WTC11 (cell line): ENCODE measurements at regions of chr1 and their contacts with region 1.

Region 1: GRCh38 chr1:159945483-159946241 is at the start of gene IGSF9:
- DNase-seq: peak; percentile 98
- ATAC-seq: peak; percentile 90
- H3K4me3 Mint-ChIP-seq: peak within 1 kb of the TSS; percentile 89
- H3K27ac Mint-ChIP-seq: peak within 1 kb of the TSS; percentile 86
- H3K4me1 Mint-ChIP-seq: peaks cover 43% of the 10 kb centered on the region
- H3K27me3 Mint-ChIP-seq: no peaks in the 10 kb centered on the region; the same call in 1 of the 2 replicates
- CTCF ChIP-seq: 0 out of 2 replicates have a peak, but pooled peaks have one; percentile 24
- total RNA-seq, gene IGSF9: 16.4 to 19.4 TPM (median 18.8 TPM) in 3 replicates

Region 2: DNA sequence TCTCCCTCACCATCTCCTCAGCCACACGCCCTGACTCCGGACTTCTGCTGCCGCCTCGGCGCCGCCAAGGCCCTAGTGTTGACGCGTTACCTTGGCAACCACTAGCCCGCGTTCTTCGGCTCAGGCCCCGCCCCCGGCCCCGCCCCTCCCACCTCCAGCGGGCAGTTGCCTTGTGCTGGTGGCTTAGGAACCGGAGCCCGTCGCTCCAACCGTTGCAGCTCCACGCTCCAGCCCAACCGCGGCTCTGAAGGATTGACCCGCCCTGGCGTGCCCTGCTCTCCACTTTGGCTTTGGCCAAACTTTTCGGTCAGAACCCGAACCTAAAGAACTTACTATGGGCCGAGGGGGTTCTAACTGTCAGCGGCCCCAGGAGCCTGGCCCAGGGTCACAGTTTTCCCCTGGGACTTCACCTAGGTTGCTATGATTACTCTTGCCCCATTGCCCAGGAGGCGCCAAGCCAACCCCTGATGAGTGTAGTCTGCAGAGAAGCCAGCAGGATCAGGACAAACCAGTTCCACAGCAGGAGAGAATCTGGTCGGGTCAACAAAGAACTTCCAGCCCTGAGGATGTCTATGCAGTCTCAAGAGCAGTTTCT is 45.5 kb before region 1 on chr1 and contains the start of gene CFAP45:
- CTCF ChIA-PET with region 1: no interaction called
- POLR2A ChIA-PET with region 1: no interaction called
- DNase-seq: peak; percentile 92
- ATAC-seq: peak; percentile 96
- H3K4me3 Mint-ChIP-seq: peak within 1 kb of the TSS; percentile 55
- H3K27ac Mint-ChIP-seq: peak within 1 kb of the TSS; percentile 1; the same call in 1 of the 2 replicates
- H3K4me1 Mint-ChIP-seq: peaks cover 15% of the 10 kb centered on the region
- H3K27me3 Mint-ChIP-seq: peaks cover 31% of the 10 kb centered on the region
- CTCF ChIP-seq: no peak
- total RNA-seq, gene CFAP45: 0.27 to 0.48 TPM (median 0.48 TPM) in 3 replicates

Region 3: GRCh38 chr1:159913451-159914192 is 32.0 kb before region 1 on chr1:
- CTCF ChIA-PET with region 1: no interaction called
- POLR2A ChIA-PET with region 1: no interaction called
- DNase-seq: no peak
- ATAC-seq: peak; percentile 46
- H3K4me3 Mint-ChIP-seq: peak overlapping the region; percentile 5; the same call in 1 of the 2 replicates
- H3K27ac Mint-ChIP-seq: peak overlapping the region; percentile 85
- H3K4me1 Mint-ChIP-seq: peaks cover 69% of the 10 kb centered on the region
- H3K27me3 Mint-ChIP-seq: no peaks in the 10 kb centered on the region
- CTCF ChIP-seq: no peak

Region 4: DNA sequence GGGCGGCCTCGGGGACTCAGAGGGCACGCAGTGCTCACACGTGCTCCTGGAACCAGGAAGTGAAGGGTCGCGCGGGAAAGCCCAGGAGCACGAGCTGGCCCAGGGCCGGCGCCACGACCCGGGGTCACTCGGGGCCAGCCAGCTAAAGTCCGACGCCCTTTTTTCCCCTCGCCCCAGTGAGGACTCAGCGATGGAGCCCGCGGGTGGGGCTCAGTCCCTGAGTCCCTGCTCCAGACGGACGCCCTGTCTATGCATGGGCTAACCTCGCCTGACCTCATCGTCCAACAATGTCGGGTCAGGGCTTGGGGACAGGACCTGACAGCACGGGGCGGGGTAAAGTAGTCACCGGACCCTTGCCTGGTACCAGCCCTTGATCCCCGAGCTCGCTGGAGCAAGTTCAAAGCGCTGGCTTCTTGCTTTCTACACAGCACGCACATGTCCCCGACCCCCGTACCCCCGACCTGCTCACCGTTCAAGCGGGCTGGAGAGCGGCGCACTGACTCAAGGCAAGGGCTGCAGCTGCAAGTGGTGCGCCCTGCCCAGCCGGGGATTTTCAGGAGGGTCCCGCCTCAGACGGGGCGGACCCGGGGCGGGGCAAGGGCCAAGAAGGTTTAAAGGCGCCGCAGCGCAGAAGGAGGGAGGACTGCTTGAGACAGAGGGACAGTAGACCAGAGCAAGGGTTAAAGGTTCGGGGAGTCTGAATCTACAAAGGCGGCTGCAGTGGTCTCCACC is 20.5 kb before region 1 on chr1 and contains the start of gene TAGLN2:
- CTCF ChIA-PET with region 1: interaction called, 11 read pairs
- POLR2A ChIA-PET with region 1: interaction called, 8 read pairs
- DNase-seq: peak; percentile 88
- ATAC-seq: peak; percentile 80
- H3K4me3 Mint-ChIP-seq: peak within 1 kb of the TSS; percentile 85
- H3K27ac Mint-ChIP-seq: no peak within 1 kb of the TSS
- H3K4me1 Mint-ChIP-seq: peaks cover 37% of the 10 kb centered on the region
- H3K27me3 Mint-ChIP-seq: peaks cover 18% of the 10 kb centered on the region
- CTCF ChIP-seq: no peak
- total RNA-seq, gene TAGLN2: 66.9 to 75.3 TPM (median 73.3 TPM) in 3 replicates

Region 5: DNA sequence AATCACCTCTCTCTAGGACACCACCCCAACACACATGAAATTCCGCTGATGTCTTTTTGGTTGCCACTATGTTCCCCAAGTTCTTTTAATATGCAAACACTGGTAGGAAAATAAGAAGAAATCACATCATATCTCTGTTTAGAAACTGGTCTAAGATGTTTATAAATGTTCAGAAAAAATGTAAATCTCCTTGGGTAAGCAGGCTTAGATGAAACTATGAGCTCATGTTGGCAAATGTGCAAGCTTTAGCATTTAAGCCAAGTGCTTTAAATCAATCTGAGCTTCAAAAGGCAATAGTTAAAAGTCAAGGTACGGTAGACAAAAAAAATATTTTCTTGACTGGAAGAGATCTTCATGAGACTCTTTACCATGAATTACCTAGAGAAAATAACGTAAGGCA is 33.6 kb after region 1 on chr1:
- CTCF ChIA-PET with region 1: no interaction called
- POLR2A ChIA-PET with region 1: no interaction called
- DNase-seq: no peak
- ATAC-seq: no peak
- H3K4me3 Mint-ChIP-seq: no peak overlapping the region
- H3K27ac Mint-ChIP-seq: no peak overlapping the region
- H3K4me1 Mint-ChIP-seq: no peaks in the 10 kb centered on the region; the same call in 1 of the 2 replicates
- H3K27me3 Mint-ChIP-seq: peaks cover 9% of the 10 kb centered on the region; the same call in 1 of the 2 replicates
- CTCF ChIP-seq: no peak